ENCODE measurements at regions of chr19 and their contacts with region 1.

Region 1: DNA sequence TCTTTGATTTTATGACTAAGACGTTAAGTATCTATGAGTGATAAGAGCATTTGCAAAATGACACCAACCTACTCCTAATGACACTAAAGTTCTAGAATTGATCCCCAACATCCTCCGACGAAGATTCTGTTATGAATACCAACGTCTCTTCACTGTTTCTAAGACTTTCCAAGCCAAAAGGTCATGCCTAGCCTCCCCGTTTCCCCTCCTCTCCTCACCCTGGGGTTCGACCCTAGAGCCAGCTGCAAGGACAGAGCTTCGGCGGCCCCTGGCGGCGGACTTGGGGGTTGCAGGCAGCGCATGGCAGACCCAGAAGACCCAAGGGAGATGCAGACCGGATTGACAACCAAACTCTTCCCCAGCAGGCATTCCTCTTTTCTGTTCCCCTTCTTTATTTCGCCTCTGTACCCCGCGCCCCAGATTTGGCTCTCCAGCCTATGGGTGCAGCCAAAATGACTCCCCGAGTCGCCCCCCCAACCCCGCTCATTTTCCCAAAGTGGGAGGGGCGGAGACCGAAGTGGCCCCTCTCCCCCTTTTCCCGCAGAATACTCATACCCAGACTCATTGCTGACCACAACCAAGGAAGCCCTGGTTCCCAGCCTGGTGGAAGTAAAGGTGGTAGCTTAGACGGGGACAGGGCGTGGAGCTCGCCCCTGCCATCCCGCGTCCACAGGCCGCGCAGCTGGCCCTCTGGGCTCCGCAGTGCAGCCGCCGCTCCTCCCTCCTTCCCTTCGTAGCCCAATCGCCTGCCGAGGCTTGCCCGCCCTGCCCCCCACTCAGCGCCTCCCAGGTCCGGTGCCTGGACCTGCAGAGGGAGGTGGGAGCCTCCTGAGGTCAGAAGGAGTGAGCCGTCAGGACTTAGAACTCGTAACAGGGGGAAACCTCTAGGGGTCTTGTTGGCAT is 4.1 kb upstream of the EML2 start:
- DNase-seq: peak; percentile 87 to 92 (median 89)
- H3K4me3 ChIP-seq: no peak overlapping the region
- H3K4me3 Mint-ChIP-seq: peak overlapping the region; percentile 77 to 92 (median 82)
- H3K27ac ChIP-seq: peak overlapping the region; percentile 98
- H3K27ac Mint-ChIP-seq: peak overlapping the region; percentile 91 to 98 (median 93)
- H3K4me1 ChIP-seq: peaks cover 63% of the 10 kb centered on the region
- H3K4me1 Mint-ChIP-seq: peaks cover 28 to 57% (median 41%) of the 10 kb centered on the region in 4 donors
- H3K27me3 ChIP-seq: no peaks in the 10 kb centered on the region
- H3K27me3 Mint-ChIP-seq: no peaks in the 10 kb centered on the region

Region 2: DNA sequence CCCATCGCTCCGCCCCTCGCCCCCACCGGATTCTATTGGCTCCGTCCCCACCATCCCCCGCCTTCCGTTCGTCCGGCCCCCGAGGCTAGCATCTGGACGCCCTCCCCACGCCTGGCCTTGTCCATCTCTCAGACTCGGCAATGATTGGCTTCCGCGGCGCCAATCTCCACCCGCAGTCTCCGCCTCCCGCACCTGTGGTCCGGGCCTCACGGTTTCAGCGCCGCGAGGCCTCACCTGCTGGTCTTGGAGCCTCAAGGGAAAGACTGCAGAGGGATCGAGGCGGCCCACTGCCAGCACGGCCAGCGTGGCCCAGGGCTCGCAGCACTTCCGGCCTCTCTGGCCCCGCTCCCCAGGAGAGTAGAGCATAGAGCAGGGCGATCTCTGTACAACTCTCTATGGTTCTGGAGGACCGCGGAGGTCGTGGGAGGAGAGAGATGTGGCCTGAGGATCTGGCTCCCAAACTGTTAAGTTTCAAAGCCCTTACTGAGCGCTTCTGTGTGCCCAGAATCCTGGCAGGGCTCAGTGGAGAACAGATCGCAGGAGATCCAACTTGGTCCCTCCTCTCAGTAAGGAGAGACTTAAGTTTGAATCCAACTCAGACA is 219.6 kb before region 1 on chr19 and contains the start of gene ERCC1:
- CTCF ChIA-PET with region 1: interaction called, 3 read pairs
- POLR2A ChIA-PET with region 1: interaction called, 3 read pairs
- intact Hi-C with region 1: loop called (anchors 2 kb)
- DNase-seq: peak in 4 of 5 donors; percentile 67 to 87 (median 71)
- H3K4me3 ChIP-seq: peak within 1 kb of the TSS; percentile 54 to 74
- H3K4me3 Mint-ChIP-seq: peak within 1 kb of the TSS; percentile 91 to 97 (median 94)
- H3K27ac ChIP-seq: peak within 1 kb of the TSS; percentile 68
- H3K27ac Mint-ChIP-seq: peak within 1 kb of the TSS; percentile 89 to 97 (median 94)
- H3K4me1 ChIP-seq: peaks cover 36% of the 10 kb centered on the region
- H3K4me1 Mint-ChIP-seq: peaks cover 28 to 58% (median 41%) of the 10 kb centered on the region in 4 donors
- H3K27me3 ChIP-seq: no peaks in the 10 kb centered on the region
- H3K27me3 Mint-ChIP-seq: peaks cover 0 to 2% of the 10 kb centered on the region in 2 donors
- total RNA-seq, gene ERCC1: 46.6 to 46.9 TPM

Region 3: GRCh38 chr19:45485305-45486077 is 157.8 kb before region 1 on chr19:
- CTCF ChIA-PET with region 1: interaction called, 17 read pairs
- POLR2A ChIA-PET with region 1: interaction called, 16 read pairs
- intact Hi-C with region 1: loop called (anchors 1 kb)
- DNase-seq: peak; percentile 93 to 97 (median 95)
- H3K4me3 ChIP-seq: peak overlapping the region; percentile 66 to 88
- H3K4me3 Mint-ChIP-seq: peak overlapping the region; percentile 91 to 97 (median 93)
- H3K27ac ChIP-seq: peak overlapping the region; percentile 34
- H3K27ac Mint-ChIP-seq: peak overlapping the region; percentile 72 to 94 (median 89)
- H3K4me1 ChIP-seq: peaks cover 5% of the 10 kb centered on the region
- H3K4me1 Mint-ChIP-seq: peaks cover 0 to 11% (median 7%) of the 10 kb centered on the region in 4 donors
- H3K27me3 ChIP-seq: no peaks in the 10 kb centered on the region
- H3K27me3 Mint-ChIP-seq: peaks cover 2 to 3% of the 10 kb centered on the region in 2 donors

Region 4: GRCh38 chr19:45523642-45524256 is 119.5 kb before region 1 on chr19:
- CTCF ChIA-PET with region 1: interaction called, 5 read pairs
- POLR2A ChIA-PET with region 1: interaction called, 4 read pairs
- intact Hi-C with region 1: loop called (anchors 1 kb)
- DNase-seq: peak; percentile 81 to 83 (median 82)
- H3K4me3 ChIP-seq: no peak overlapping the region
- H3K4me3 Mint-ChIP-seq: no peak overlapping the region
- H3K27ac ChIP-seq: no peak overlapping the region
- H3K27ac Mint-ChIP-seq: peak overlapping the region; percentile 77 to 87 (median 82)
- H3K4me1 ChIP-seq: peaks cover 3% of the 10 kb centered on the region
- H3K4me1 Mint-ChIP-seq: peaks cover 7 to 21% (median 11%) of the 10 kb centered on the region in 4 donors
- H3K27me3 ChIP-seq: no peaks in the 10 kb centered on the region
- H3K27me3 Mint-ChIP-seq: peaks cover 0 to 2% of the 10 kb centered on the region in 2 donors

Region 5: GRCh38 chr19:45547976-45548609 is 95.2 kb before region 1 on chr19:
- CTCF ChIA-PET with region 1: no interaction called
- POLR2A ChIA-PET with region 1: no interaction called
- intact Hi-C with region 1: no loop called
- DNase-seq: no peak
- H3K4me3 ChIP-seq: no peak overlapping the region
- H3K4me3 Mint-ChIP-seq: no peak overlapping the region
- H3K27ac ChIP-seq: no peak overlapping the region
- H3K27ac Mint-ChIP-seq: no peak overlapping the region
- H3K4me1 ChIP-seq: no peaks in the 10 kb centered on the region
- H3K4me1 Mint-ChIP-seq: peaks cover 0 to 6% (median 3%) of the 10 kb centered on the region in 4 donors
- H3K27me3 ChIP-seq: no peaks in the 10 kb centered on the region
- H3K27me3 Mint-ChIP-seq: no peaks in the 10 kb centered on the region

Region 6: GRCh38 chr19:45613926-45614725 is 29.1 kb before region 1 on chr19:
- CTCF ChIA-PET with region 1: interaction called, 121 read pairs
- POLR2A ChIA-PET with region 1: interaction called, 7 read pairs
- intact Hi-C with region 1: no loop called
- DNase-seq: peak in 2 of 5 donors; percentile 19 to 50
- H3K4me3 ChIP-seq: no peak overlapping the region
- H3K4me3 Mint-ChIP-seq: no peak overlapping the region
- H3K27ac ChIP-seq: no peak overlapping the region
- H3K27ac Mint-ChIP-seq: peak overlapping the region; percentile 18 to 84 (median 63)
- H3K4me1 ChIP-seq: peaks cover 7% of the 10 kb centered on the region
- H3K4me1 Mint-ChIP-seq: peaks cover 6 to 14% (median 10%) of the 10 kb centered on the region in 4 donors
- H3K27me3 ChIP-seq: no peaks in the 10 kb centered on the region
- H3K27me3 Mint-ChIP-seq: no peaks in the 10 kb centered on the region

Region 7: DNA sequence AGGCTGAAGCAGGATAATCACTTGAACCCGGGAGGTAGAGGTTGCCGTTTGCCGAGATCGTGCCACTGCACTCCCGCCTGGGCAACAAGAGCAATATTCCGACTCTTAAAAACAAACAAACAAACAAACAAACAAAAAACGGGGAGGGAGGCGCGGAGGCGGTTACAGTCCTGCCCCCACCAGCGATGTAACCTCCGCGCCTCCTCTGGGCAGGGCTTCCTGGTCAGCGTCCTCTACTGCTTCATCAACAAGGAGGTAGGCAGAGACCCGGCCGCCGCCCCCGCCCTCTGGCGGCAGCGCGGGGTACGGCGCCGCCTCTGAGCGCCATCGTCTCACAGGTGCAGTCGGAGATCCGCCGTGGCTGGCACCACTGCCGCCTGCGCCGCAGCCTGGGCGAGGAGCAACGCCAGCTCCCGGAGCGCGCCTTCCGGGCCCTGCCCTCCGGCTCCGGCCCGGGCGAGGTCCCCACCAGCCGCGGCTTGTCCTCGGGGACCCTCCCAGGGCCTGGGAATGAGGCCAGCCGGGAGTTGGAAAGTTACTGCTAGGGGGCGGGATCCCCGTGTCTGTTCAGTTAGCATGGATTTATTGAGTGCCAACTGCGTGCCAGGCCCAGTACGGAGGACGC is 38.2 kb after region 1 on chr19:
- CTCF ChIA-PET with region 1: interaction called, 22 read pairs
- POLR2A ChIA-PET with region 1: interaction called, 18 read pairs
- intact Hi-C with region 1: loop called (anchors 1 kb)
- DNase-seq: peak; percentile 78 to 89 (median 85)
- H3K4me3 ChIP-seq: peak overlapping the region in 1 of 2 donors; percentile 42
- H3K4me3 Mint-ChIP-seq: peak overlapping the region; percentile 78 to 88 (median 86)
- H3K27ac ChIP-seq: peak overlapping the region; percentile 35
- H3K27ac Mint-ChIP-seq: peak overlapping the region; percentile 57 to 92 (median 78)
- H3K4me1 ChIP-seq: peaks cover 24% of the 10 kb centered on the region
- H3K4me1 Mint-ChIP-seq: peaks cover 11 to 30% (median 20%) of the 10 kb centered on the region in 4 donors
- H3K27me3 ChIP-seq: no peaks in the 10 kb centered on the region
- H3K27me3 Mint-ChIP-seq: peaks cover 0 to 5% of the 10 kb centered on the region in 2 donors

Region 8: GRCh38 chr19:45770192-45771101 is 127.2 kb after region 1 on chr19:
- CTCF ChIA-PET with region 1: no interaction called
- POLR2A ChIA-PET with region 1: no interaction called
- intact Hi-C with region 1: loop called (anchors 2 kb)
- DNase-seq: peak; percentile 89 to 93 (median 91)
- H3K4me3 ChIP-seq: peak overlapping the region; percentile 57 to 71
- H3K4me3 Mint-ChIP-seq: peak overlapping the region; percentile 84 to 92 (median 86)
- H3K27ac ChIP-seq: peak overlapping the region; percentile 15
- H3K27ac Mint-ChIP-seq: peak overlapping the region; percentile 61 to 94 (median 88)
- H3K4me1 ChIP-seq: peaks cover 22% of the 10 kb centered on the region
- H3K4me1 Mint-ChIP-seq: peaks cover 1 to 30% (median 5%) of the 10 kb centered on the region in 4 donors
- H3K27me3 ChIP-seq: no peaks in the 10 kb centered on the region
- H3K27me3 Mint-ChIP-seq: peaks cover 1 to 6% of the 10 kb centered on the region in 2 donors

Measured in CD4-positive, alpha-beta memory T cell (primary cell).